Naive thymus-derived CD4-positive, alpha-beta T cell (primary cell): ENCODE measurements at regions of chr4 and their contacts with region 1.

Region 1: GRCh38 chr4:242121-242848 is 63.0 kb downstream of the ZNF732 start:
- DNase-seq: peak; percentile 43 to 80 (median 71)
- ATAC-seq: peak; percentile 100
- H3K4me3 ChIP-seq: peak overlapping the region; percentile 72
- H3K4me3 Mint-ChIP-seq: peak overlapping the region; percentile 66 to 95 (median 90)
- H3K27ac ChIP-seq: peak overlapping the region; percentile 58
- H3K27ac Mint-ChIP-seq: peak overlapping the region; percentile 80 to 89 (median 85)
- H3K4me1 ChIP-seq: no peaks in the 10 kb centered on the region
- H3K4me1 Mint-ChIP-seq: peaks cover 10 to 13% (median 11%) of the 10 kb centered on the region in 7 donors
- H3K27me3 ChIP-seq: no peaks in the 10 kb centered on the region
- H3K27me3 Mint-ChIP-seq: no peaks in the 10 kb centered on the region

Region 2: DNA sequence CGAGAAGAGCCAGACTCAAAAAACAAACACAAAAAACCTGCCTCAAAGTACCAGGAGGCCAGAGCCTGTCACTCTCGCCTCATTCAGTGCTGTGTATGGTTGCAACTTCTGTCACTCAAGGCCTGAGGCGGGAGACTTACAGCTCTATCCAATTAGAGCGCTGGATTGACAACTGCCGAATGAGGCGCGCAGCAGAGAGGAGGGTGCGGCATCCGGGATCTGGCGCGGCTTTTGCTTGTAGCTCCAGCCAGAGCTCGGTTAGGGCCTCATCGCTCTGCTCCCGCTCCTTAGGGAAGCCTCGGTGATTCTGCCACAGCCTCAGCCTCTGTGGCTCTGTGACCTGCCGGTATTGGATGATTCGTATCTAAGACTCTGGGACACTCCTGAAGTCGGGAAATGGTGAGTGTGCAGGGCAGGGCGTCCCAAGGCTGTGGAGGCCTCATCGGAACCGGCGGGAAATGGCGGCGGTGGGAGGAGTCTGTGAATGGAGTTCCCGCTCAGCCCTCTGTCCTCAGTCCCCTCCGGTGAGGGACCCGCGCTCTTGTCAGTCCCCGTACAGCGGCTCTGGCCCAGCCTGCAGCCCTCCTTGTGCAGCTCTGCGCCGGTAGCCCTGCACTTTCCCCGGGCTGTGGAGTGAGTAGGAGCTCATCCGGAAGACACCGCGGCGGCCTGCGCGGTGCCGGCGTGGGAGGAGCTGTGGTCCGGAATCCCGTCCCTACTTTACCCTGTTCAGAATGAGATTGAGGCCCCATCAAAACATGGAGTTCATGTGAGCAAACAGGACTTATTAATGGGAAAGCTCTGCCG is 117.8 kb before region 1 on chr4 and contains the start of gene ZNF718:
- CTCF ChIA-PET with region 1: no interaction called
- POLR2A ChIA-PET with region 1: no interaction called
- intact Hi-C with region 1: loop called in 1 of 2 experiments (anchors 5 kb)
- DNase-seq: peak; percentile 17 to 94 (median 90)
- ATAC-seq: peak; percentile 93
- H3K4me3 ChIP-seq: peak within 1 kb of the TSS; percentile 89
- H3K4me3 Mint-ChIP-seq: peak within 1 kb of the TSS; percentile 91 to 100 (median 98)
- H3K27ac ChIP-seq: peak within 1 kb of the TSS; percentile 94
- H3K27ac Mint-ChIP-seq: peak within 1 kb of the TSS; percentile 93 to 100 (median 99)
- H3K4me1 ChIP-seq: peaks cover 22 to 30% of the 10 kb centered on the region in 2 donors
- H3K4me1 Mint-ChIP-seq: peaks cover 21 to 52% (median 42%) of the 10 kb centered on the region in 7 donors
- H3K27me3 ChIP-seq: no peaks in the 10 kb centered on the region
- H3K27me3 Mint-ChIP-seq: no peaks in the 10 kb centered on the region
- total RNA-seq, gene ZNF718: 2.4 to 12.3 (median 10.0) TPM

Region 3: DNA sequence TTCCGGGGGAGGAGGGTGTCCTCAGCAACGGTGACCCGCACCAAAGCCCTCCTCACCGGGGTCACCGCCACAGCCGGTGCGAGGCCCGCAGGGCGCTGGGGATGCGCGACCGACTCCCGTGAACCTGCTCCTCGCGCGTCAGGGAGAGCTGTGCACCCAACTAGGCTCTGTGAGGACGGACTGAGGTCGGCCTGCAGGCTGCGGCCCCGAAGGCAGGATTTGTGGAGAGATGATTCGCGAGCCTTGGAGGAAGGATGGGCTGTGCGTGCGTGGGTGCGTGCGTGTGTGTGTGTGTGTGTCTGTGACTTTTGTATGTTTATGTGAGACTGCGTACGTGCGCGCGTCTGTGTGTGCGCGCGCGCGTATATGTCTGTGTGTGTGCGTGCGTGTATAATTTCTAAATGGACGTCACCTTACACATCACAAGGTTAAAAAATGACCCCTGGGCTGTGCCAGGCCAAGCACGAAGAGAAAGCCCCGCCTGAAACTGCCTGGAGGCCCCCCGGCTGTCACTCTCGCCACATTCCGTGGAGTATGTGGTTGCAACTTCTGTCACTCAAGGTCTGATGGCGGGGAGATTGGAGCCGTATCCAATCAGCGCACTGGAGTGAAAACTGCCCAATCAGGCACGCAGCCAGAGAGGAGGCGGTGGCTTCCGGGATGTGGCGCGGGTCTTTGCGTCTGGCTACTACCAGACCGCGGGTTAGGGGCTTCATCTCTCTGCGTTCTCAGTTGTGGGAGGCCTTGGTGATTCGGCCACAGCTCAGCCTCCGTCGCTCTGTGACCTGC is 95.1 kb after region 1 on chr4 and contains the start of gene ZNF141:
- CTCF ChIA-PET with region 1: no interaction called
- POLR2A ChIA-PET with region 1: no interaction called
- intact Hi-C with region 1: loop called (anchors 1 kb)
- DNase-seq: peak; percentile 74 to 95 (median 93)
- ATAC-seq: peak; percentile 93
- H3K4me3 ChIP-seq: peak within 1 kb of the TSS; percentile 91
- H3K4me3 Mint-ChIP-seq: peak within 1 kb of the TSS; percentile 93 to 100 (median 99)
- H3K27ac ChIP-seq: peak within 1 kb of the TSS; percentile 85
- H3K27ac Mint-ChIP-seq: peak within 1 kb of the TSS; percentile 95 to 100 (median 99)
- H3K4me1 ChIP-seq: peaks cover 9 to 10% of the 10 kb centered on the region in 2 donors
- H3K4me1 Mint-ChIP-seq: peaks cover 11 to 46% (median 41%) of the 10 kb centered on the region in 7 donors
- H3K27me3 ChIP-seq: no peaks in the 10 kb centered on the region
- H3K27me3 Mint-ChIP-seq: peaks cover 0 to 6% (median 0%) of the 10 kb centered on the region in 5 donors
- total RNA-seq, gene ZNF141: 19.7 to 76.1 (median 29.0) TPM

Region 4: DNA sequence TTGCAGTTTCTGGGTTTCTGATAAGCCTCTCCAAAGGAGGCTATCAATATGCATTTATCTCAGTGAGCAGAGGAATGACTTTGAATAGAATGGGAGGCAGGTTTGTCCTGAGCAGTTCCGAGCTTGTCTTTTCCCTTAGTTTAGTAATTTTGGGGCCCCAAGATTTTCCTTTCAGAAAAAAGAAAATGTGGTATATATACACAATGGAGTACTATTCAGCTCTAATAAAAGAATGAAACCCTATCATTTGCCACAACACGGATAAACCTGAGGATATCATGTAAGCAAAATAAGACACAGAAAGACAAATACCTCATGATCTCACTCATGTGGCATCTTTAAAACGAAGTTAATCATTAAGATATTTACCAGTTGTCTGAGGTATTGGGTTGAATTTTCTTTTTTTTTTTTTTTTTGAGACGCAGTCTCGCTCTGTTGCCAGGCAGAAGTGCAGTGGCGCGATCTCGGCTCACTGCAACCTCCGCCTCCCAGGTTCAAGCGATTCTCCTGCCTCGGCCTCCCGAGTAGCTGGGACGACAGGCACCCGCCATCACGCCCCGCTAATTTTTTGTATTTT is 256.1 kb after region 1 on chr4:
- CTCF ChIA-PET with region 1: no interaction called
- POLR2A ChIA-PET with region 1: no interaction called
- intact Hi-C with region 1: loop called (anchors 2 to 10 kb)
- DNase-seq: no peak
- ATAC-seq: peak; percentile 60
- H3K4me3 ChIP-seq: peak overlapping the region; percentile 96
- H3K4me3 Mint-ChIP-seq: peak overlapping the region; percentile 90 to 97 (median 94)
- H3K27ac ChIP-seq: peak overlapping the region; percentile 94
- H3K27ac Mint-ChIP-seq: peak overlapping the region; percentile 91 to 98 (median 97)
- H3K4me1 ChIP-seq: peaks cover 13 to 16% of the 10 kb centered on the region in 2 donors
- H3K4me1 Mint-ChIP-seq: peaks cover 19 to 53% (median 44%) of the 10 kb centered on the region in 7 donors
- H3K27me3 ChIP-seq: no peaks in the 10 kb centered on the region
- H3K27me3 Mint-ChIP-seq: no peaks in the 10 kb centered on the region

Region 5: GRCh38 chr4:742742-743311 is 500.5 kb after region 1 on chr4:
- CTCF ChIA-PET with region 1: no interaction called
- POLR2A ChIA-PET with region 1: no interaction called
- intact Hi-C with region 1: loop called in 1 of 2 experiments (anchors 10 kb)
- DNase-seq: peak; percentile 47 to 80 (median 69)
- ATAC-seq: peak; percentile 93
- H3K4me3 ChIP-seq: no peak overlapping the region
- H3K4me3 Mint-ChIP-seq: no peak overlapping the region
- H3K27ac ChIP-seq: no peak overlapping the region
- H3K27ac Mint-ChIP-seq: peak overlapping the region in 1 of 9 donors; percentile 41
- H3K4me1 ChIP-seq: no peaks in the 10 kb centered on the region
- H3K4me1 Mint-ChIP-seq: peaks cover 0 to 6% (median 2%) of the 10 kb centered on the region in 7 donors
- H3K27me3 ChIP-seq: no peaks in the 10 kb centered on the region
- H3K27me3 Mint-ChIP-seq: no peaks in the 10 kb centered on the region

Region 6: GRCh38 chr4:1258457-1258856 is 1016.2 kb after region 1 on chr4:
- CTCF ChIA-PET with region 1: no interaction called
- POLR2A ChIA-PET with region 1: no interaction called
- intact Hi-C with region 1: loop called in 1 of 2 experiments (anchors 10 kb)
- DNase-seq: no peak
- ATAC-seq: no peak
- H3K4me3 ChIP-seq: no peak overlapping the region
- H3K4me3 Mint-ChIP-seq: no peak overlapping the region
- H3K27ac ChIP-seq: no peak overlapping the region
- H3K27ac Mint-ChIP-seq: peak overlapping the region in 1 of 9 donors; percentile 53
- H3K4me1 ChIP-seq: peaks cover 9 to 10% of the 10 kb centered on the region in 2 donors
- H3K4me1 Mint-ChIP-seq: peaks cover 28 to 48% (median 35%) of the 10 kb centered on the region in 7 donors
- H3K27me3 ChIP-seq: no peaks in the 10 kb centered on the region
- H3K27me3 Mint-ChIP-seq: no peaks in the 10 kb centered on the region